Heart left ventricle (tissue), 16 donors: ENCODE measurements at regions of chr22 and their contacts with region 1.

Region 1: DNA sequence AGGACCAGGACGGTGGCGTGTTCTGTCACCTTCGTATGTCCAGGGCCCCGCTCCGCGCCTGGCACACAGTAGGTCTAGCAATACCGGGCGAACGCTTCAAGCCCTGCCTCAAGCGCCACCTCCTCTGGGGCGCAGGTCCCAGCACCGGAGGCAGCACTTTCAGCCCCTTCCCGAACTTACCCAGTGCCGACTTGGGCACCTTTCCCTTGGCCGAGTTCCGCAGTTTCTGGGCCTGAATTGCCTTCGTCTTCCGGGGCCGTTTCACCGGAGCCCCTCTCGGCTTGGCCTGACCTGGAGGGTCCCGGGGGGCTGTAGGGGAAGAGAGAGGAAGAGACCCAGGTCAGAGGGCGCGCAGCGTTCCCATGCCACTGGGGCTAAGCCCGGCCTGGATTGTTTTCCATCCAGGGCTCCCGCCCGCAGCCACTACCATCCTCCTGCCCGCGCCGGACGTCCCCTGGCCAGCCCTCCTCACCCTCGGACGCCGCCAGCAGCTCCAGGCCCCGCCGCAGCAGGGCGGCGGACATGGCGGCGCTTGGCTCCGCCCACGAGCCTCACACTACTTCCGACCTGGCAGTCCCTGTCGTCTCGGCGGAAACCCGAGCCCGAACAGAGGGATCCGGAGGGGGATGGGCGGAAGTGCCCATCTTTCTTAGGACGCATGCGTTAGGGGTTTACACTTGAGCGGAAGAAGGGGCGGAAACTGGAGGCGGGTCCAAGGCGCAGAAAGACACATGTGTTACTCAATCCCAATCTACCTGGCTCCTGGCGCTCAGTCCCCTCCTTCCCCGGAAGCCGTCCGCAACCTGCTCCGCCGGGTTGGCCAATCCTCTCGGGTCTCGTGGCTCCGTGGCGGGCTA is at the start of gene RPS19BP1:
- DNase-seq: peak; percentile 98 to 100 (median 99)
- ATAC-seq: peak; percentile 87 to 92 (median 88)
- H3K4me3 ChIP-seq: peak within 1 kb of the TSS; percentile 53 to 96 (median 85)
- H3K27ac ChIP-seq: peak within 1 kb of the TSS; percentile 66 to 97 (median 92)
- H3K4me1 ChIP-seq: peaks cover 7 to 56% (median 43%) of the 10 kb centered on the region in 12 donors
- H3K27me3 ChIP-seq: no peaks in the 10 kb centered on the region
- CTCF ChIP-seq: no peak
- POLR2A ChIP-seq: peak in 1 of 2 donors; percentile 89
- total RNA-seq, gene RPS19BP1: 33.2 to 108 (median 44.5) TPM

Region 2: GRCh38 chr22:39135090-39135896 is 397.1 kb before region 1 on chr22:
- intact Hi-C with region 1: no loop called
- DNase-seq: peak; percentile 49 to 82 (median 68)
- ATAC-seq: peak in 3 of 4 donors; percentile 66 to 75 (median 73)
- H3K4me3 ChIP-seq: no peak overlapping the region
- H3K27ac ChIP-seq: peak overlapping the region in 1 of 12 donors; percentile 57
- H3K4me1 ChIP-seq: peaks cover 0 to 32% (median 15%) of the 10 kb centered on the region in 12 donors
- H3K27me3 ChIP-seq: no peaks in the 10 kb centered on the region
- CTCF ChIP-seq: peak in 11 of 12 donors; percentile 24 to 67 (median 44)
- POLR2A ChIP-seq: no peak

Region 3: DNA sequence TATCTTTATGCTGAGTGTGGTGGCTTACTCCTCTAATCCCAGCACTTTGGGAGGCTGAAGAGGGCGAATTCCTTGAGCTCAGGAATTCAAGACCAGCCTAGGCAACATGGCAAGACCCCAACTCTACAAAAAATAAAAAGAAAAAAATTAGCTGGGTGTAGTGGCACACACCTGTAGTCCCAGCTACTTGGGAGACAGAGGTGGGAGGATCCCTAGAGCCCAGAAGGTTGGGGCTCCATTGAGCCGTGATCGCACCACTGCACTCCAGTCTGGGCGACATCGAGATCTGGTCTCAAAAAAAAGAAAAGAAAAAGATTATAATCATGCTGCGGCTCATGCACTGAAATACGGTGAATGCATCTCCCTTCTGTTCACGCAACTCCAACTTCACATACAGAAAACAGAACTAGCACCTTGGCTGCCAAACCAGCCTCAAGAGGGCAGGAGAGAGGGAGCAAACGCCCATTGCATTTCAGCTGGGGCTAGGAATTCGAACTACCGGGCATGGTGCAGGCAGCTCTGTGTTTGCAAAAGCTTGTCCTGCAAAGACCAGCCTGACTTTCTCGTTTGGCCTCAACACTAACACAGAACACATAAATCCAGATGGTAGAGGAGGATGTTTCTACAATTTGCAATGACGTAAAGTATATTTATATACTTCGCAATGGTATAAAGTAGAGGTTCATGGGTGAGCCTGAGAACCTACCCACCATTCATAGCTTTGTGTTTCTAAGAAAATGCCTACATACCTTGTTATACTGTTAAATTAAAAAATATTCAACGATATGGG is 189.0 kb before region 1 on chr22:
- intact Hi-C with region 1: loop called in 6 of 10 experiments (anchors 2 to 10 kb)
- DNase-seq: peak in 4 of 5 donors; percentile 44 to 60 (median 58)
- ATAC-seq: peak in 3 of 4 donors; percentile 72 to 83 (median 80)
- H3K4me3 ChIP-seq: no peak overlapping the region
- H3K27ac ChIP-seq: no peak overlapping the region
- H3K4me1 ChIP-seq: peaks cover 0 to under 1% (median 0%) of the 10 kb centered on the region in 12 donors
- H3K27me3 ChIP-seq: peaks cover 0 to 3% (median 0%) of the 10 kb centered on the region in 9 donors
- CTCF ChIP-seq: peak; percentile 49 to 80 (median 64)
- POLR2A ChIP-seq: no peak

Region 4: DNA sequence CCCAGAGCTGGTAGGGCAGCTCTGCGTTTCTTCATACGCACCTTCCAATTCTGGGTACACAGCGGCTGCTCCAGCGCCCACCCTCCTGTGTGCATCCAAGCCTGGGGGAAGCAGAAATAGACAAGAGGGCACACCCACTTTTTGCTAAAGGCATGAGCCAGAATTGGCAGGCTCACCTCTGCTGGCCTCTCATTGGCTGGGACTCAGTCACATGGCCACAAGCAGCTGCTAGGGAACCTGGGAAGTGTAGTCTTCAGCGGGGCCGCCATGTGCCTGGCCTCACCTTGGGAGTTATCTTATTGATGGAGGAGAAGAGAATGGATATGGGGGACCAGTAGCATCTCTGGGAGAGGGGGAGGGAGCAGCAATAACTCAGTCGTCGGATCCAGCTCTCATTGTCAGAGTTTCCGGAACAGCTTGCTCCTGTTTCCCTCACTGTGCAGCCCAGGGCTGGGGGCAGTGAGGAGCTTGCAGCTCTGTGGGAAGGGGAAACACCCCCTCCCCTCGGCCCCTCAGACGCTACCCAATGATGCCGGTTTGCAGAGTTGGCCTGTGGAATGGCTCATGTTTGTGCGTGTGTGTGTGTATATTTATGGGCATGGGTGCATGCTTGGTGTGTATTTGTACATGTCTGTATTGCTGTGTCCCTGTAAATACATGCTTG is 42.2 kb before region 1 on chr22:
- intact Hi-C with region 1: loop called in 7 of 10 experiments (anchors 2 to 5 kb)
- DNase-seq: peak; percentile 79 to 90 (median 88)
- ATAC-seq: peak; percentile 85 to 95 (median 93)
- H3K4me3 ChIP-seq: peak overlapping the region in 1 of 12 donors; percentile 23
- H3K27ac ChIP-seq: peak overlapping the region in 2 of 12 donors; percentile 15 to 24
- H3K4me1 ChIP-seq: peaks cover 0 to 29% (median 0%) of the 10 kb centered on the region in 12 donors
- H3K27me3 ChIP-seq: no peaks in the 10 kb centered on the region
- CTCF ChIP-seq: no peak
- POLR2A ChIP-seq: no peak

Region 5: GRCh38 chr22:40024201-40025061 is 492.0 kb after region 1 on chr22:
- intact Hi-C with region 1: loop called in 9 of 10 experiments (anchors 1 to 5 kb)
- DNase-seq: peak; percentile 51 to 80 (median 61)
- ATAC-seq: peak; percentile 74 to 89 (median 84)
- H3K4me3 ChIP-seq: no peak overlapping the region
- H3K27ac ChIP-seq: no peak overlapping the region
- H3K4me1 ChIP-seq: peaks cover 0 to 9% (median 0%) of the 10 kb centered on the region in 12 donors
- H3K27me3 ChIP-seq: peaks cover 0 to 19% (median 0%) of the 10 kb centered on the region in 9 donors
- CTCF ChIP-seq: peak; percentile 68 to 89 (median 84)
- POLR2A ChIP-seq: no peak

Region 6: GRCh38 chr22:40346178-40347118 is 814.0 kb after region 1 on chr22 and contains the start of gene ADSL:
- intact Hi-C with region 1: loop called in 9 of 10 experiments (anchors 5 to 10 kb)
- DNase-seq: peak; percentile 90 to 93 (median 93)
- ATAC-seq: peak; percentile 95 to 98 (median 98)
- H3K4me3 ChIP-seq: peak within 1 kb of the TSS; percentile 49 to 85 (median 76)
- H3K27ac ChIP-seq: peak within 1 kb of the TSS; percentile 23 to 92 (median 90)
- H3K4me1 ChIP-seq: peaks cover 0 to 33% (median 16%) of the 10 kb centered on the region in 12 donors
- H3K27me3 ChIP-seq: no peaks in the 10 kb centered on the region
- CTCF ChIP-seq: peak in 3 of 12 donors; percentile 11 to 30 (median 26)
- POLR2A ChIP-seq: peak in 1 of 2 donors; percentile 85
- total RNA-seq, gene ADSL: 46.9 to 87.8 (median 52.0) TPM